Endothelial cell of umbilical vein (primary cell): ENCODE measurements at regions of chr16 and their contacts with region 1.

Region 1: GRCh38 chr16:72832621-72833248 is 215.2 kb downstream of the ZFHX3 start:
- DNase-seq: peak; percentile 78
- H3K4me3 ChIP-seq: no peak overlapping the region
- H3K27ac ChIP-seq: no peak overlapping the region
- H3K4me1 ChIP-seq: no peaks in the 10 kb centered on the region
- H3K27me3 ChIP-seq: no peaks in the 10 kb centered on the region
- CTCF ChIP-seq: peak; percentile 97 to 99
- POLR2A ChIP-seq: no peak

Region 2: DNA sequence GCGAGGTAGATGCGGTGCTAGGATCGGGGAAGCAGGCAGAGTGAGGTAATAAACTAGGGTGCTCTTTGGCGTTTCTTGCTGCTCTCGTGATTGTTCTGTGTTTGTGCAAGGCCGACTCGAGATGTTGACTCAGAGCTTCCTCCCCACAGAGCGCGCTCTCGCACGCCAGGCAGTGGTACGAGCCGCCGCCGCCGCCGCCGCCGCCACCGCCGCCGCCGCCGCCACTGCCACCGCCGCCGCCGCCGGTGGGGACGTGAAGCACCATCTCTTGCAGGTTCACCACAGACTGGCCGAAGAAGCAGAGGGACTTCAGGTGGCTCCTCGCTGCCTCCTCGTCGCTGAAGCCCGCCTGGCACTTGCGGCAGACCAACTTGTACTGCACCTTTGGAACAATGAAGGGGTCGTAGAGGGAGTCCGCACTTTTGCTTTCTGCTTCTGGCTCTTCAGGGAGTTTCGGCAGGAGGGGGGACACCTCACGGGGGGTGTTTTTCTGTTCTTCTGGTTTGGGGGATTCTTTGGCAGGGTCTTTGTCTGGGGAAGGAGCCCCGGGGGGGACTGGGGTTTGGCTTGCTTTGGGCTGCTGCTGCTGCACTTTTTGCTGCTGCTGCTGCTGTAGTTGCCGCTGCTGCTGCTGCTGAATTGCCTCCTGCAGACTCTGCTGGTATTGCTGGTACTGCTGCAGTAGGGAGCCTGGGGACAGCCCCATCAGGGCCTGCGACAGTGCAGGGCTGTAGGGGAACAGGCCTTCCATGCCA is 45.0 kb before region 1 on chr16:
- CTCF ChIA-PET with region 1: interaction called, 13 read pairs
- POLR2A ChIA-PET with region 1: no interaction called
- dilution Hi-C with region 1: no loop called
- intact Hi-C with region 1: no loop called
- DNase-seq: peak; percentile 86
- H3K4me3 ChIP-seq: peak overlapping the region; percentile 27 to 57 (median 55)
- H3K27ac ChIP-seq: peak overlapping the region; percentile 95
- H3K4me1 ChIP-seq: peaks cover 7% of the 10 kb centered on the region
- H3K27me3 ChIP-seq: no peaks in the 10 kb centered on the region
- CTCF ChIP-seq: no peak
- POLR2A ChIP-seq: no peak

Region 3: GRCh38 chr16:72847187-72848027 is 14.7 kb after region 1 on chr16:
- CTCF ChIA-PET with region 1: interaction called, 22 read pairs
- POLR2A ChIA-PET with region 1: no interaction called
- dilution Hi-C with region 1: no loop called
- intact Hi-C with region 1: no loop called
- DNase-seq: peak; percentile 32
- H3K4me3 ChIP-seq: no peak overlapping the region
- H3K27ac ChIP-seq: peak overlapping the region; percentile 90
- H3K4me1 ChIP-seq: peaks cover 22% of the 10 kb centered on the region
- H3K27me3 ChIP-seq: no peaks in the 10 kb centered on the region
- CTCF ChIP-seq: peak; percentile 25 to 50
- POLR2A ChIP-seq: no peak

Region 4: DNA sequence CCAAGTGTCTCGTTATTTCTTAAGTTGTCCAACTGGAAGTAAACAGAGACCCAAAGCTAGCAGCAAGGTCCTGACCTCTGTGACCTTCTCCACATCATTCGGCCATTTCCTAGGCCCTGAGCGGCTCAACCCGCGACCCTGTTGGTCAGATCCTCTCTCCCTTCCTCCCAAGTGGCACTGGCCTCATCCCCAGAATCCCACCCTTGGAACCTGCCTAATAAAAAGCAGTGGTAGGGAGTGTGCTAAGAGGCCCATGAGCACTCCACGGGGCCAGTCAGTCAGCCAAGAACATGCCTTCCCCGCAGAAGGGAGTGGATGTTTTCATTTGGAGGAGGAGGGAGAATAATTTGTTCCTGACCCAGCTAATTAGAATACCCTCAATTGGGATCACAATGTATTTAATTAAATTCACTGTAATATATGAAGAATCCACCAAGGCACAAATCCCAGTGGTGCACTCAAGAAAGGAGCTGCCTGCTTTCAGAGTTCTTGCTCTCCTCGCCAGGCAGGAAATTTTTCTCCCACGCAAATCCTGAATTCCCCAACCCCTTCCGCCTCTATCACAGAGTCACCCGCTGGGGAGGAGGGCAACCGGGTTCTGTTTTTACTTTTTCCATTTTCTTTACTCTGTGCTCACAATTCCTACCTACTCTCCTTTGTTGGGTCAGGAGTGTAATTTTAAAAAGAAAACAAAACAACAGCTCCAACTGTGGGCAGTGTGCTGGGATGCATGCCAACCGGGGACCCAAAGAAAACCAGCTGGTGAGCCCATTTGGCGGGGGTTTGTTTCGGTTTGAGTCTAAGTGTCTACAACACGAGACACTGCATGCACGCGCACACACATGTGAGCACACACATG is 61.8 kb after region 1 on chr16:
- CTCF ChIA-PET with region 1: interaction called, 16 read pairs
- POLR2A ChIA-PET with region 1: interaction called, 4 read pairs
- dilution Hi-C with region 1: no loop called
- intact Hi-C with region 1: no loop called
- DNase-seq: peak; percentile 77
- H3K4me3 ChIP-seq: peak overlapping the region in 1 of 3 experiments; percentile 2
- H3K27ac ChIP-seq: peak overlapping the region; percentile 35
- H3K4me1 ChIP-seq: peaks cover 21% of the 10 kb centered on the region
- H3K27me3 ChIP-seq: no peaks in the 10 kb centered on the region
- CTCF ChIP-seq: no peak
- POLR2A ChIP-seq: no peak

Region 5: DNA sequence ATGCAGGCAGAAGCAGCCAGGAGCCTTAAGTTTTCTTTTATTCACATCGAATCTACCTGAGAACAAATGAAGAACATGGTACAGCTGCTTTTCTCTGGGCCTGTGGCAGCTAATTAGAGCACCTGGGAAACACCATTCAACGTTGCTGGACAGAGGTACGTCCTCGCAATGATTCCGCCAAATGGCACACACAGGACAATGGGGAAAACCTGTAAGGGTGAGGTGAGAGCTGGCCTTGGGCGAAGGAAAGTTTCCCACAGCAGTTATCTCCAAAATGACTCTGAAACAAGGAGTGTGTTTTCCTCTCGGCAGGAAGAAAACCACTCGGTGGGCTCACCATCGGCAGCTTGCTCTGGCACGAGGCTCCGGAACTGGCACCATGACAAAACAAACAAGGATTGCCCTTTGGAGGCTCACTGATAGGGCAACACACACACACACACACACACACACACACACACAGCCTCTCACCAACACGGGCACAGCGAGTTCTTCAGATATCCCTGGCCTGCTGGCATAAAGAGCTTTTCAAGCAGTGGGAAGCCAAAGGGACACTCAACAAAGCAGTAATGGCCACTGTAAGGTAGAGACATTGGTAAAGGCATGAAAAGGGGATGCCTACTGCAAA is 141.5 kb after region 1 on chr16:
- CTCF ChIA-PET with region 1: interaction called, 19 read pairs
- POLR2A ChIA-PET with region 1: no interaction called
- dilution Hi-C with region 1: no loop called
- intact Hi-C with region 1: no loop called
- DNase-seq: peak; percentile 90
- H3K4me3 ChIP-seq: no peak overlapping the region
- H3K27ac ChIP-seq: no peak overlapping the region
- H3K4me1 ChIP-seq: peaks cover 18% of the 10 kb centered on the region
- H3K27me3 ChIP-seq: no peaks in the 10 kb centered on the region
- CTCF ChIP-seq: no peak
- POLR2A ChIP-seq: no peak

Region 6: GRCh38 chr16:73068541-73069401 is 236.0 kb after region 1 on chr16:
- CTCF ChIA-PET with region 1: interaction called, 11 read pairs
- POLR2A ChIA-PET with region 1: interaction called, 3 read pairs
- dilution Hi-C with region 1: no loop called
- intact Hi-C with region 1: loop called (anchors 5 kb)
- DNase-seq: peak; percentile 92
- H3K4me3 ChIP-seq: no peak overlapping the region
- H3K27ac ChIP-seq: peak overlapping the region; percentile 92
- H3K4me1 ChIP-seq: peaks cover 76% of the 10 kb centered on the region
- H3K27me3 ChIP-seq: no peaks in the 10 kb centered on the region
- CTCF ChIP-seq: no peak
- POLR2A ChIP-seq: peak; percentile 78

Region 7: DNA sequence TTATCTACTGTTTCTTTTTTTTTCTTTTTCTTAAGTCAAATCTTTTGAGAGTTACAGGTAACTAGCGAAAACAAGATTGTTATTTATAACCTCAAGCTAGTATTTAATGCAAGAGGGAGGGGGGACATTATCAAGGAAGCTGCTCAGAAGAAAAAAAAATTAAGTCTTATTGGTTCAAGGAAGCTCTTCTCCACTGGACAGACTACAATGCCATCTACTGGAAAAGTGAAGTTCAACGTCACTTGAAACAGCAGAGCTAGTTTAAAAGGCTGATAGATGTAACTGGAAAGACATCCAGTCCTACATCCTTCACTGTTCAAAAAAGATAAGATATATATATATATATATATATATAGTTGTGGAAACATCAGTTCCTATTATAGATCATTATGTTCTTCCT is 1045.9 kb after region 1 on chr16:
- CTCF ChIA-PET with region 1: interaction called, 13 read pairs
- POLR2A ChIA-PET with region 1: no interaction called
- dilution Hi-C with region 1: no loop called
- intact Hi-C with region 1: no loop called
- DNase-seq: peak; percentile 65
- H3K4me3 ChIP-seq: no peak overlapping the region
- H3K27ac ChIP-seq: no peak overlapping the region
- H3K4me1 ChIP-seq: no peaks in the 10 kb centered on the region
- H3K27me3 ChIP-seq: no peaks in the 10 kb centered on the region
- CTCF ChIP-seq: peak in 1 of 2 donors; percentile 34
- POLR2A ChIP-seq: no peak